Activated B cell treated with CpG ODN at 0.5 μM for 24 hours (primary cell): ENCODE measurements at regions of chr20 and their contacts with region 1.

Region 1: GRCh38 chr20:9912858-9913434 is 74.1 kb upstream of the PAK5 start:
- DNase-seq: no peak
- ATAC-seq: no peak
- H3K4me3 Mint-ChIP-seq: no peak overlapping the region
- H3K27ac Mint-ChIP-seq: no peak overlapping the region
- H3K4me1 Mint-ChIP-seq: no peaks in the 10 kb centered on the region
- H3K27me3 Mint-ChIP-seq: peaks cover 18% of the 10 kb centered on the region
- CTCF ChIP-seq: no peak

Region 2: GRCh38 chr20:9616833-9617489 is 296.0 kb before region 1 on chr20:
- CTCF ChIA-PET with region 1: interaction called, 3 read pairs
- POLR2A ChIA-PET with region 1: no interaction called
- intact Hi-C with region 1: loop called (anchors 2 kb)
- DNase-seq: no peak
- ATAC-seq: no peak
- H3K4me3 Mint-ChIP-seq: no peak overlapping the region
- H3K27ac Mint-ChIP-seq: no peak overlapping the region
- H3K4me1 Mint-ChIP-seq: peaks cover 9% of the 10 kb centered on the region
- H3K27me3 Mint-ChIP-seq: peaks cover 18% of the 10 kb centered on the region
- CTCF ChIP-seq: no peak